Sciatic nerve (tissue), 2 donors: ENCODE measurements at regions of chr1 and their contacts with region 1.

Region 1: DNA sequence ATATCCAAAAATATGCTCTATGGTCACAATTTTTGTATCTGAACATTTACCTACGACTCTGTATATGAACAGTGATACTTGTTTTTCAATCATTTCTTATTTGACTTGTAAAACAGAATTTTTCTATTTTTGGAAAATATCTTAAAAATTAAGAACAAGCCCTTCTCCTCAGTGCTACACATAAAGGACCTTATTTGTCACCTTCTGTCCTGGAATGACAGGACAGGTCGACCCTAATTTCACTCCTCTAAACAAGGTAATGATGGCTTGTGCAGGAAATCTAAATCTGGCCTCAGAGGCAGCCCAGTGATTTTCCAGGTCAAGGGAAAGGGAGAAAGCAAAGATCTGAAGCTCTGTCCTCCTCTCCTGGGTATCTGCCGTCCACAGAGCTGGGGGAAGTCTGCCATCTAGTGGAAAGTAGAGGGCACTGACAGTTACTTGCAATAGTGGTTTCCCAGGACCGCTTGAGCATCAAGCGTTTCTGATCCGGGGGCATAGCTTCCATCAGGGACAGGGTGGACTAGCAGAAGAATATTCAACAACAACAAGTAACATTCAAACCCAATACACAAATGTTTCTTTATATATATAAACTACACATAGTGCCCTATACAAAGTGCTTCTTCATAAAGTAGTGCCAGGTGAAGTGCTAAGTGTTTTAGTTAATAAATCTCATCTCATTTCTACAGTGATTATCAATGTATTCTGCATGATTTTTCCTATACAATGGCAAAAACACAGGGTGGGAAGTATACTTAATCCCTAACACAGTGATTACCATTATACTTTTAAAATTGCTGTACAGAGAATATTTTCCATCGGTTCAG is 74.6 kb downstream of the SLC25A24 start:
- DNase-seq: peak; percentile 74
- ATAC-seq: peak; percentile 94

Region 2: GRCh38 chr1:107782217-107782845 is 343.2 kb before region 1 on chr1:
- intact Hi-C with region 1: loop called (anchors 1 kb)
- DNase-seq: no peak
- ATAC-seq: peak; percentile 73